ENCODE measurements at regions of chr15 and their contacts with region 1.

Region 1: GRCh38 chr15:84716036-84716799 is at the start of gene SEC11A:
- DNase-seq: peak; percentile 91
- H3K4me3 Mint-ChIP-seq: peak within 1 kb of the TSS; percentile 94
- H3K27ac Mint-ChIP-seq: peak within 1 kb of the TSS; percentile 96
- H3K4me1 Mint-ChIP-seq: peaks cover 59% of the 10 kb centered on the region
- H3K27me3 Mint-ChIP-seq: no peaks in the 10 kb centered on the region
- total RNA-seq, gene SEC11A: 97.3 and 105 TPM in 2 replicates

Region 2: DNA sequence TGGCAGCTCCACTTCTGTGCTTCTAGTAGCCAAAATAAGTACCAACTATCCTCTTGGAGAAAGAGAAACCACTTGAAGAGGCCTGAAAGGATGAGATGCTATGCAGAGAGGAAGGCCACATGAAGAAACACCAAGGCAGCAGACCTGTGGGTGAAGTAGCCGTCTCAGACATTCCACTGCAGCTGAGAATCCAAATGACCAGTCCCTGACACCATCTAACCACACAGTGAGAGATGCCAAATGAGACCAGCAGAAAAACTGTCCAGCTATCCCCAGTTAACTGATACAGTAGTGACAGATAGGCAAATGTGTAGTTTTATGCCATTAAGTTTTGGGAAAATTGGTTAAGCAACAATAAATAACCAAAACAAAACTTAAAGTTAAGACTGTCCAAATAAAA is 163.3 kb before region 1 on chr15:
- intact Hi-C with region 1: no loop called
- DNase-seq: no peak
- H3K4me3 Mint-ChIP-seq: no peak overlapping the region
- H3K27ac Mint-ChIP-seq: no peak overlapping the region
- H3K4me1 Mint-ChIP-seq: peaks cover 19% of the 10 kb centered on the region
- H3K27me3 Mint-ChIP-seq: peaks cover 2% of the 10 kb centered on the region

Region 3: GRCh38 chr15:84600851-84601838 is 115.1 kb before region 1 on chr15 and contains the start of gene ZSCAN2:
- intact Hi-C with region 1: loop called (anchors 1 kb)
- DNase-seq: peak; percentile 92
- H3K4me3 Mint-ChIP-seq: peak within 1 kb of the TSS; percentile 89
- H3K27ac Mint-ChIP-seq: peak within 1 kb of the TSS; percentile 72
- H3K4me1 Mint-ChIP-seq: peaks cover 59% of the 10 kb centered on the region
- H3K27me3 Mint-ChIP-seq: no peaks in the 10 kb centered on the region
- total RNA-seq, gene ZSCAN2: 6.5 and 7.0 TPM in 2 replicates

Region 4: GRCh38 chr15:84669726-84670125 is 46.5 kb before region 1 on chr15:
- intact Hi-C with region 1: loop called (anchors 1 kb)
- DNase-seq: no peak
- H3K4me3 Mint-ChIP-seq: peak overlapping the region; percentile 8
- H3K27ac Mint-ChIP-seq: peak overlapping the region; percentile 79
- H3K4me1 Mint-ChIP-seq: peaks cover 44% of the 10 kb centered on the region
- H3K27me3 Mint-ChIP-seq: no peaks in the 10 kb centered on the region

Region 5: GRCh38 chr15:84748274-84749110 is 32.3 kb after region 1 on chr15 and contains the start of gene ZNF592:
- intact Hi-C with region 1: loop called (anchors 1 kb)
- DNase-seq: peak; percentile 75
- H3K4me3 Mint-ChIP-seq: peak within 1 kb of the TSS; percentile 91
- H3K27ac Mint-ChIP-seq: peak within 1 kb of the TSS; percentile 95
- H3K4me1 Mint-ChIP-seq: peaks cover 56% of the 10 kb centered on the region
- H3K27me3 Mint-ChIP-seq: no peaks in the 10 kb centered on the region
- total RNA-seq, gene ZNF592: 29.9 and 30.9 TPM in 2 replicates